ENCODE measurements at regions of chr7 and their contacts with region 1.

Region 1: GRCh38 chr7:35694781-35695472 is at the start of gene HERPUD2:
- DNase-seq: peak; percentile 93 to 96 (median 95)
- H3K4me3 ChIP-seq: peak within 1 kb of the TSS; percentile 83 to 99 (median 87)
- H3K27ac ChIP-seq: peak within 1 kb of the TSS; percentile 92 to 95
- H3K4me1 ChIP-seq: peaks cover 19 to 53% (median 43%) of the 10 kb centered on the region in 4 experiments
- H3K27me3 ChIP-seq: no peaks in the 10 kb centered on the region

Region 2: GRCh38 chr7:35593896-35594295 is 101.0 kb before region 1 on chr7:
- CTCF ChIA-PET with region 1: no interaction called
- POLR2A ChIA-PET with region 1: no interaction called
- DNase-seq: no peak
- H3K4me3 ChIP-seq: no peak overlapping the region
- H3K27ac ChIP-seq: no peak overlapping the region
- H3K4me1 ChIP-seq: peaks cover 0 to 6% (median 1%) of the 10 kb centered on the region in 4 experiments
- H3K27me3 ChIP-seq: no peaks in the 10 kb centered on the region

Region 3: DNA sequence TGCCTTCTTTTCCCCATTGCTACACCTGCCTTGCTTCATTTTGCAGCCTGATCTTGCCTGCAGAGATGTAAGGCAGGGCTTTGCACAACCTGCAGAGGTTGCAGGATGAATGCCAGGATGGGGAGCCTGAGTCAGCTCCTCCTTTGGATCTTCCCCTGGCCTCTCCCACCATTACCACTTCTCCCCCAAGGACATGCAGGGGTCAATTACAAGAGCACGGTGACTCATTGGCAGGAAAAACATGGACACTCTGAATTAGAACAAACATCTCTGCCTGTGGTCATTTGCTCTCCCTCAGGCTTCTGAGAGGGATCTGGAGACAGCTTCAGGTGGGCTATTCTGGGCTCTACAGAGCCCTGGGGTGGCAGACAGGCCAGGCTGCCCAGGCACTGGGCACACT is 89.2 kb before region 1 on chr7:
- CTCF ChIA-PET with region 1: no interaction called
- POLR2A ChIA-PET with region 1: no interaction called
- DNase-seq: no peak
- H3K4me3 ChIP-seq: no peak overlapping the region
- H3K27ac ChIP-seq: no peak overlapping the region
- H3K4me1 ChIP-seq: no peaks in the 10 kb centered on the region
- H3K27me3 ChIP-seq: no peaks in the 10 kb centered on the region

Region 4: GRCh38 chr7:35707422-35707821 is 12.5 kb after region 1 on chr7:
- CTCF ChIA-PET with region 1: interaction called, 15 read pairs
- POLR2A ChIA-PET with region 1: interaction called, 7 read pairs
- DNase-seq: no peak
- H3K4me3 ChIP-seq: no peak overlapping the region
- H3K27ac ChIP-seq: no peak overlapping the region
- H3K4me1 ChIP-seq: peaks cover 0 to 10% (median 7%) of the 10 kb centered on the region in 4 experiments
- H3K27me3 ChIP-seq: no peaks in the 10 kb centered on the region

Region 5: DNA sequence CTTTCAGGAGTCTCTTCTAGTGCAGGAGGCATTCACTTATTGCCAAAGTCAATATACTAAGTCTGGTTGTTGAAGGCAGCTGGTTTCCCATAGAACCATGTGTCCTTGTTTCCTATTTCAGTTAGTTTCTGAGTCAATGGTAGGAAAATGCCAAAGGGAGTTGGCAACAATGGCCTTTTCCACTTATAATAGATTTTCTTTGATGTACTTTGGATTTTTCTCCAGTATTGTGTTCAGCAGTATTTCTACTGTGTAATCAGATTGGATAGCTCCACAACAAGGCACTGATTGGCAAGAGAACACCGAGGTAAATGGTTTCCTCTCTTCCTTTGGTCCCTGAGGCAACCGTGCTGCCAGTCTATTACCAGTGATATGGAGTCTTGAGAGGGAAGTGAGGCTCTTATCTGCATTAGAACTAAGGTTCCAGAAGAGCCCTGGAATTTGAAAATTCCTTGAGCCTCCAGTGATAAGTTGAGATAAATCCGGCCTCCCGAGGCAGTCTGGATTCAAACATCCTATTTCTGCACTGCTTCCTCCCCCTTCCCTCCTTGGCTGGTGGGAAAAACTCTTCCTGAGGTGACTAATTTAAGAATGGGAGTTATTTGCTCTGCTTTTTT is 98.1 kb after region 1 on chr7:
- CTCF ChIA-PET with region 1: no interaction called
- POLR2A ChIA-PET with region 1: no interaction called
- DNase-seq: no peak
- H3K4me3 ChIP-seq: no peak overlapping the region
- H3K27ac ChIP-seq: no peak overlapping the region
- H3K4me1 ChIP-seq: no peaks in the 10 kb centered on the region
- H3K27me3 ChIP-seq: no peaks in the 10 kb centered on the region

Measured in common myeloid progenitor, CD34-positive (primary cell).